ENCODE measurements at regions of chr1 and their contacts with region 1.

Region 1: DNA sequence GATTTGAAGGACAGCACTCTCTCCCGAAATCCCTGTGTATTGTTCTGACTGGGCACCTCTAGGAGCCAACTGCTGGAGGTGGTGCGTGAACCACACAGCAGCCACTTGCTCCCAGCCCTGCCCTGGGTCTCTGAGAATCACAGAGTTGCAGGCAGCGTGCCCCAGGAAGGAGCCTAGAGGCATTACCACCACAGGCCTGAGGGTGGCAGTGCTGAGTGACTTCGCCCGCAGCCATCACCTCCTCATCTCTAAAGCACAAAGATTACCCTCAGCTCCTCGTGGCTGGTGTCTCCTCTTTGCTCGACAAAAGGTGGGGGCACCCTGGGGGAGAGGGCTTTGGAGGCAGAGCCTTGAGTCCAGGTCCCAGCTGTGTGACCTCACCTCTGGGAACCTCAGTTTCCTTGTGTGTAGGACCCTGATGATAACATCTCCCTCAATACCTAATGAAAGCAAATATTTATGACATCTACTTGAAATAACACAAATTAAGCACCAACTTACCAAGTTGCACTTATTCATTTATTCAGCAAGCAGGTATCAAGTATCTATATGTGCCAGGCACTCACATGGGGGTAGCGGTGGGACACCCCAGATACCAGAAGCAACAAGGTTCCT is 86.3 kb downstream of the VWA5B1 start:
- DNase-seq: peak; percentile 28
- ATAC-seq: peak; percentile 90
- H3K4me3 ChIP-seq: no peak overlapping the region
- H3K27ac ChIP-seq: no peak overlapping the region
- H3K4me1 ChIP-seq: no peaks in the 10 kb centered on the region
- H3K27me3 ChIP-seq: peaks cover 3% of the 10 kb centered on the region
- CTCF ChIP-seq: peak; percentile 92

Region 2: DNA sequence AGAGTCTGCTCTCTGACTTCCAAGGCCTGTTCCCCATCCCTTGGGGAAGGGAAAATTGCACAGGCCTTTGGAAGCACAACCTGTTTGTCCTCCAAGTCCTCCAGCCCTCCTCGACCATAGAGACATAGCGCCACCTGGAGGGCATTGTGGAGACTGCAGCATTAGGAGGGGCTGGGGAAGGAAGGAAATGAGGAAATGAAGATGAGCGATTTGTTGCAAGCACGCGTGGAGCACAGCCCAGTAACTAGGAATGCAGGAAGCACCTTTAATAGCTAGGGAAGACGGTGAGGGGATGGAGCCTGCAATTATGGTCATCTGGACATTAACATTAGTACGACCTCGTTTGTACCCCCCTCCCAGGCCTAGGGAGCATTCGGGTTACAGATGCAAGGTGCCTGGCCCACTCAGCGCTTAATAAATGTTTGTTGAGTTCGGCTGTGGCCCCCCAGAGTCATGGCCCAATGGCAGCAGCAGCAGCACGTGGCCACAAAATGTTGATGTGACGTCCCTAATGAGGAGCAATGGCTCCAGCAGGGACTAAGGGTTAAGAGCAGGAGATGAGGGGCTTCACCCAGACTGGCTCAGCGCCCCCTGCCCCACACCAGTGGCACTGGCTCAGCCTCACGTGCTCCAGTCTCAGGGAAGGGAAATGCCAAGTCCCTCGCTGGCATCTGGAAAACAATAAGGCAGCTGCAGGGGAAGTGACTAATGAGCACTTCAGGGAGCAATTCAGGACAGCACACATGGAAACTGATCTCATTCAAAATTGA is 117.0 kb after region 1 on chr1:
- CTCF ChIA-PET with region 1: no interaction called
- POLR2A ChIA-PET with region 1: no interaction called
- in situ Hi-C with region 1: no loop called
- intact Hi-C with region 1: loop called (anchors 5 kb)
- DNase-seq: peak; percentile 90
- ATAC-seq: peak; percentile 72
- H3K4me3 ChIP-seq: no peak overlapping the region
- H3K27ac ChIP-seq: no peak overlapping the region
- H3K4me1 ChIP-seq: no peaks in the 10 kb centered on the region
- H3K27me3 ChIP-seq: no peaks in the 10 kb centered on the region
- CTCF ChIP-seq: peak; percentile 94

Measured in Panc1 (cell line).